GM10248 (cell line): ENCODE measurements at regions of chr5 and their contacts with region 1.

Region 1: DNA sequence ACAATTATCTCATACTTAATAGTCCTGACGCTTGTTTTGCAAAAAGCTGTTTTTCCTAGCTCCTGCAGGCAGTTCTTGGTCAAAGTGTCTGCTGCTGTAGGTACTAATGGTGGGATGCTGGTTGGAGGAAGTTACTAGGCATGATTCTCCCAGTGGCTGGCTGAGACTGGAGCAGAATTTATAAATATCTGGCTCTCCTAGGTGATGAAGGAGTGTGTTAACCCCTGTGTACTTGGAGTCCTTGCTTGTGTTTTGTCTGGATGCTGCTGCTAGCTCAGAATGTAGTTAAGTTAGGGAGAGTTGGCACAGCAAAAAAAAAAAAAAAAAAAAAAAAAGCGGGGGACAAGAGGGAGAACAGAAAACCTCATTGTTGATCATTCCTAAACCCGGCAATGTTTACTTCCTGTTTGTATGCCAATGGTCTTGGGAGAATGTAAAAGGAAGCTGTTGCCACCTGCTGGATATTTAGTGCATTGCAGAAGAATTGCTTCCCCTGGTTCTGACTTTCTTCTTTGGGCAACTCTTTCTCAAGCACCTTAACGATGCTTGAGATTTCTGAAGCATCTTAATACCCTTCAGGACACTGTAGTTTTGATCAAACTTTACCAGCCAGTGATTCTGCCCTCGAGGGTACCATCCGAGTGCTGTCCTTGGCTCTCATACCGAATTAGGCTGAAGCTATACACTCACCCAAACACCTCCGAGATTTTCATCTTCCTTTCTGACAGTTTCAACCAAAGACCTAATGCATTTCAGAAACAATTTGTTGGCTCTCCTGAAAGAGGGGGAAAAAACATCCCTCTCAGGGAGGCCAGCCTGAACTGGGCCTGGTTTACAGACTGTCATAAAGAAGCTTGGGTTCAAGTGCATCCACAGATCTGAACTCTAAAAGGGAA is 71.7 kb upstream of the WWC1 start:
- DNase-seq: peak; percentile 76
- CTCF ChIP-seq: peak; percentile 89

Region 2: GRCh38 chr5:167723254-167723871 is 496.4 kb before region 1 on chr5:
- CTCF ChIA-PET with region 1: interaction called, 16 read pairs
- POLR2A ChIA-PET with region 1: no interaction called
- DNase-seq: peak; percentile 70
- CTCF ChIP-seq: peak; percentile 79

Region 3: GRCh38 chr5:168114444-168115017 is 105.2 kb before region 1 on chr5:
- CTCF ChIA-PET with region 1: interaction called, 106 read pairs
- POLR2A ChIA-PET with region 1: no interaction called
- DNase-seq: peak; percentile 67
- CTCF ChIP-seq: peak; percentile 78

Region 4: DNA sequence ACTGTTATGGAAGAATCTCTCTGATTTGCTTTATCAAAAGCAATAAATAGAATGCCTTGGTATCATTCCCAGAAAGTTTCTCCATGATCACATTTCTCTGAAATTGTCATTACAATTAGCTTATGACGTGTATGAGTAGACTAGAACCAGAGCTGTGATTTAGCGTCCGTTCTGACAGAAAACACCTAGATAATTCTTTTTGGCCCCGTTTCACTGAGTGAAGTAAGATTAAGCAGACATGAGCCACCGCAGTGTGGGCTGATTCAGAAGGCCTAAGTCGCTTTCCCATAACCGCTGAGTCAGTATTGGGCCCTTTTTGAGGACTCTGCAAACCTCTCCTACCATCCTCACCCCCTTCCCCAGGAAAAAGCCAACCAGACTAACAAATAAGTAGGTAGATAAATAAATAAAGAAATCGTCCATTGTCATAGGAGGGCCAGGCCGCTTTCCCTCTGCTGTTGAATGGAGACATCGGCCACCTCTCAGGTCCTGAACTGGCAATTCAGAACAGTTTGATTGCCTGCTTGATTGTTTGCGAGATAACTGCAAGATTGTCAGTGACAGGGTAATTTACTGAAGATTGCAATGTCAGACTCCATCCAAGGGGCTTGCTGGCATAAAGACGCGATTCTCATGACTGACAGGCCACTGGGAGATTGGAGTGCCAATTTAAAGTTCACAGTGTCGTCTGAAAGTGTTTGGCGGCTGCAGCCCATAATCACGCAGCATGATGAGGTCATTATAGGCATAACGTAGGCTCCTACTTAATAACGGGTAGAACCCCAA is 33.3 kb before region 1 on chr5:
- CTCF ChIA-PET with region 1: interaction called, 14 read pairs
- POLR2A ChIA-PET with region 1: no interaction called
- DNase-seq: no peak
- CTCF ChIP-seq: no peak

Region 5: GRCh38 chr5:168204165-168204564 is 15.6 kb before region 1 on chr5:
- CTCF ChIA-PET with region 1: interaction called, 24 read pairs
- POLR2A ChIA-PET with region 1: no interaction called
- DNase-seq: no peak
- CTCF ChIP-seq: no peak

Region 6: GRCh38 chr5:168291464-168291961 is 71.8 kb after region 1 on chr5 and contains the start of gene WWC1:
- CTCF ChIA-PET with region 1: no interaction called
- POLR2A ChIA-PET with region 1: no interaction called
- DNase-seq: peak; percentile 77
- CTCF ChIP-seq: peak; percentile 4